ENCODE measurements at regions of chr3 and their contacts with region 1.

Region 1: DNA sequence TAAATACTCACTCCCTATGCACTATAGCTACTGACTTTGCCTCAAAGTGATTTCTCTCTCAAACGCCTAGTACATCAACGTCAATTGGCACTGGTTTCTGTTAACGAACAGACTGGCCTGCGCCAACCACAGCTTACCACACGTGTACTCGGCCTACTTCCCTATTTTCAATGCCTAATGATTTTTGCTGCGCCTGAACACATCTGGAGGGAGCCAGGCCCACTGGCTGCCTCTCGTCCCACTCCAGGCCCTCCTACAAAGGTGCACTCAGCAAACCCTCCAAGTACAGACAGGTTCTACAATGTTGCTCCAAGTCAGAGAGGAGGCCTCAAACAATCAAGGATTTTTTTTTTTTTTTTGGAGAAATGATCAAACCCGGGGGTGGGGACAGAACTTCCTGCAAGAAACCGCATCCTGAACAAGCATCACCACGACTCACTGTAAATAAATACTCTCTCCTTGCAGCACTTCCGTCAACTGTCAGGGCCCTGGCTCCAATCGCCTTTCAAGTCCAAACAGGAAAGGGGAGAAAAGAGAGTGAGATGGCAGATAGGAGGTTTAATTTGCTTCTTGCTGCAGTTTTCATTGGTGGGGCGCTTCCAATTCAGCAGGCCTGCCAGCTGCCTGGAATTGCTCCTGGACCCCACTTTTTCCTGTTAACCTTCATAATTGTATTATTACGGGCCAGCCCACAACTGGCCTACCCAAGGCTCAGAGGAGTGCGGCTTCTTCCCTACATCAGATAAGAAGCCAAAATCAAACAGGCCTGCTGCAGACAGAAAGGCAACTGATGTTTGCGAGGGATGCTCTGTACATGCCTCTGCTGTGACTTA is 139.3 kb downstream of the FOXP1 start:
- DNase-seq: peak; percentile 97
- H3K4me3 ChIP-seq: peak overlapping the region in 1 of 3 experiments; percentile 4
- H3K27ac ChIP-seq: peak overlapping the region; percentile 93
- H3K4me1 ChIP-seq: peaks cover 54% of the 10 kb centered on the region
- H3K27me3 ChIP-seq: no peaks in the 10 kb centered on the region
- CTCF ChIP-seq: no peak

Region 2: DNA sequence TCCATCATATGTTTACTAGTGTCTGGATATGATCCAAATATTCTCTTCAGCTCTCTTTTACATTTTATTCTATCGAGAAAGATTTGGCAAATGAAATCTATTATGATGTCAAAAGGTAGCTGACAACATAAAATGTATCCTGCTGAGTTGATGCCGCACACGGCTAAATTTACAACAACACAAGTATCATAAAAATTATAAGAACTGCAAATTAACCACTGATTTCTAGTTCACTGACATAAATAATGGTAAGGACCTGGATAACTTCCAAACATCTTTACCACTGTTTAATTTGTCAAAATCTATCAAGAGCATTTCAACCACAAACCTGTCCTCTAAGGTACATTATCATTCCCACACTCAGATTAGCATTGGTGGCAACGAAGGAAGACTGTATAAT is 105.2 kb before region 1 on chr3:
- CTCF ChIA-PET with region 1: no interaction called
- dilution Hi-C with region 1: no loop called
- in situ Hi-C with region 1: no loop called
- intact Hi-C with region 1: no loop called
- DNase-seq: no peak
- H3K4me3 ChIP-seq: no peak overlapping the region
- H3K27ac ChIP-seq: no peak overlapping the region
- H3K4me1 ChIP-seq: peaks cover 3% of the 10 kb centered on the region
- H3K27me3 ChIP-seq: no peaks in the 10 kb centered on the region
- CTCF ChIP-seq: no peak

Region 3: GRCh38 chr3:71428841-71429596 is 15.2 kb before region 1 on chr3:
- CTCF ChIA-PET with region 1: no interaction called
- dilution Hi-C with region 1: no loop called
- in situ Hi-C with region 1: no loop called
- intact Hi-C with region 1: loop called (anchors 1 kb)
- DNase-seq: peak; percentile 90
- H3K4me3 ChIP-seq: peak overlapping the region; percentile 18 to 30 (median 26)
- H3K27ac ChIP-seq: peak overlapping the region; percentile 92
- H3K4me1 ChIP-seq: peaks cover 63% of the 10 kb centered on the region
- H3K27me3 ChIP-seq: no peaks in the 10 kb centered on the region
- CTCF ChIP-seq: no peak

Region 4: GRCh38 chr3:71495708-71496472 is 51.6 kb after region 1 on chr3:
- CTCF ChIA-PET with region 1: no interaction called
- dilution Hi-C with region 1: no loop called
- in situ Hi-C with region 1: no loop called
- intact Hi-C with region 1: loop called (anchors 5 kb)
- DNase-seq: peak; percentile 80
- H3K4me3 ChIP-seq: peak overlapping the region; percentile 24 to 33 (median 29)
- H3K27ac ChIP-seq: peak overlapping the region; percentile 92
- H3K4me1 ChIP-seq: peaks cover 23% of the 10 kb centered on the region
- H3K27me3 ChIP-seq: no peaks in the 10 kb centered on the region
- CTCF ChIP-seq: no peak